ENCODE measurements at regions of chr12 and their contacts with region 1.

Region 1: GRCh38 chr12:98513379-98514322 is 1.7 kb upstream of the TMPO start:
- DNase-seq: no peak
- ATAC-seq: no peak
- H3K4me3 ChIP-seq: peak overlapping the region; percentile 98
- H3K27ac ChIP-seq: peak overlapping the region; percentile 96
- H3K4me1 ChIP-seq: peaks cover 31% of the 10 kb centered on the region
- H3K27me3 ChIP-seq: no peaks in the 10 kb centered on the region
- CTCF ChIP-seq: no peak

Region 2: DNA sequence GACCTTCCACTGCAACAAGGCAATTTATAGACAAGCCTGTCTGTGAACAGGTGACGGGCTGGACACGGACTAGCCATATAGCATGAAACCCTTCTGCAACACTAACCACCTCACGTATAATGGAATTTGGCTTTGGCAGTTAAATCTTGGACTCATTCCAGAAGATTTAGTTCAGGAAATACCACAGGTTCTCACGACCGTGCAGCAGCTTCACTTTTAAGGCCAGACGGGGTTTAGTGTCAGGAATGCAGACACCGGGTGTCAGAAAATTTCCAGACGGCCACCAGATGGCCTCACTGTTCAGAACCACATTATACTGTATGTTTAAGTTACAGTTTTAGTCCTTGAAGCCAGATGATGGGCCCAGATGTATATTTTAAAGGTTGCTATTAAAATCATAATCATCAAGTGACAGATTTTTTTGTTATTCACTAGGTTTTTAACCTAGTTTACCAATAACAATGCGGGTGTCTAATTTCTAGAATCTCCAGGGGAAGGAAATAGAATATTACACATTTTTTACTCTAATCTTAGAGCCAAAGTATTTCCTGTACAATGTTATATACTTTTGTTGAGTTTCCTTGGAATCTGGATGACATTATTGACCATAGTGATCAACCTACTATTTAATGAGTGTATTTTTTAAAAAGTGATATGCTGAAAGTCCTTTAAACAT is 88.8 kb before region 1 on chr12:
- intact Hi-C with region 1: loop called (anchors 5 kb)
- DNase-seq: peak; percentile 60
- ATAC-seq: peak; percentile 75 to 84
- H3K4me3 ChIP-seq: no peak overlapping the region
- H3K27ac ChIP-seq: no peak overlapping the region
- H3K4me1 ChIP-seq: peaks cover 15% of the 10 kb centered on the region
- H3K27me3 ChIP-seq: no peaks in the 10 kb centered on the region
- CTCF ChIP-seq: peak; percentile 71